ENCODE measurements at regions of chr13 and their contacts with region 1.

Region 1: DNA sequence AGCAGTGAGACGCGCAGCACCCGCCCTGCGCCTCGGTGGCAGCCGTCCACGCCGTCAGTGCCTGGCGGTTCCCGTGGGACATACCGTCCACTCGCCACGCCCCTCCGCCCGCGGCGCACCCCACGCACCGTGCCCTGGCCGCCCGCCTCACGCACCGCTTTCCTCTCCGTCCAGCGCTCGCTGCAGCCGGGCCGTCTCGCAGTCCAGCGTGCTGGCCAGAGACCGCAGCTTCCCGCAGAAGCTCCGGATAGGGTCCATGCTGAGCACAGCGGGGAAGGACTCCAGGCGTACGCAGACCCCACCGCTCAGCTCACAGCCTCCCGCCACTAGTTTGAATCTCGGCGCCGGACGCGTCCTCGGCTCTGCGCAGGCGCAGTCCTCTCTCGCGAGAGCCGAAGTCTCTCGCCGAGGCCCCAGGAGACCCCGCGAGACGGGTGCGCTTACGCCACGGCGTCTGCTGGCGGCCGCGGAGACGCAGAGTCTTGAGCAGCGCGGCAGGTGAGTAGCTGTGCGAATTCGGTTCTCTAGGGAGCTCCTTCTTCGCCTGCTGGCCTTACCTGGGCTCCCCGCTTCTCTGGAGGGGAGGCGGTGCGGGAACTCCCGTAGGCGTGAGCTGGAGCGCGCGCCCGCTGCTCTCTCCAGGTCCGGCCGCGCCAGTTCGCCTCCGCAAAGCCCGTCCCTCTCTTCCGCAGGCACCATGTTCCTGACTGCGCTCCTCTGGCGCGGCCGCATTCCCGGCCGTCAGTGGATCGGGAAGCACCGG is at the starts of genes MRPL57 and SKA3:
- DNase-seq: peak; percentile 90 to 96 (median 93)
- ATAC-seq: peak; percentile 98
- H3K4me3 ChIP-seq: peak within 1 kb of the TSS; percentile 74 to 99 (median 85)
- H3K27ac ChIP-seq: peak within 1 kb of the TSS; percentile 94 to 99 (median 96)
- H3K4me1 ChIP-seq: peaks cover 0 to 21% (median 14%) of the 10 kb centered on the region in 12 donors
- H3K27me3 ChIP-seq: no peaks in the 10 kb centered on the region
- CTCF ChIP-seq: peak in 4 of 12 donors; percentile 11 to 35 (median 16)
- POLR2A ChIP-seq: peak in 1 of 2 donors; percentile 95
- total RNA-seq, gene MRPL57: 19.0 to 51.6 (median 22.5) TPM
- total RNA-seq, gene SKA3: 0.33 to 4.5 (median 0.59) TPM in 6 of 9 donors, not detected in the others

Region 2: DNA sequence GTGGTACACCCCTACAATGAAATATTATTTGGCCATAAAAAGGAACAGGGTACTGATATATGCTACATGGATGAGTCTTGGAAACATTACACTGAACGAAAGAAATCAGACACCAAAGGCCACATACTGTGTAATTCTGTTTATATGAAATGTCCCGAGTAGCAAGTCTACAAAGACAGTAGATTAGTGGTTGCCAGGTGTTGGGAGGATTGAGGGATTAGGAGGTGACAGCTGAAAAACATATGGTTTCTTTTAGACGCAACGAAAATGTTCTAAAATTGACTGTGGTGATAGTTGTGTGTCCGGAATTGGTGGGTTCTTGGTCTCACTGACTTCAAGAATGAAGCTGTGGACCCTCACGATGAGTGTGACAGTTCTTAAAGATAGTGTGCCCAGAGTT is 437.8 kb before region 1 on chr13:
- intact Hi-C with region 1: no loop called
- DNase-seq: no peak
- ATAC-seq: no peak
- H3K4me3 ChIP-seq: no peak overlapping the region
- H3K27ac ChIP-seq: no peak overlapping the region
- H3K4me1 ChIP-seq: no peaks in the 10 kb centered on the region
- H3K27me3 ChIP-seq: no peaks in the 10 kb centered on the region
- CTCF ChIP-seq: no peak
- POLR2A ChIP-seq: no peak

Region 3: DNA sequence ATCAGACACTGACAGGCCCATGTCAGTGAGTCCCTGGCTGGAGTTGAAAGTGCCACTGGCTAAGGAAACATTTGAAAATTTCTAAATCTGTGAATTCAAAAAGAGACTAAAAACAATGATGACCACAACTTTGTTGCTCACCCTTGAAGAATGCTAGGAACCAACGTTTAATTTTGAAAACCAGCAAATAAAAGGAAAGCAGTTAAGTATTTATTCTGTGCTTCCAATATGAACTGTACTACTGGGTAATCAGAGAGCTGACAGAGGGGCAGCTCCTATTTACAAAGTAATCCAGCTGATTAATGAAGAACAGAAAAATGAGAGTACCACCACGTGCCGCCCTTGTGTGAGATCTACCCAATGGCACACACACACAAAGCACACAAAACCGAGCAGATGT is 70.3 kb before region 1 on chr13:
- intact Hi-C with region 1: loop called in 3 of 10 experiments (anchors 2 to 5 kb)
- DNase-seq: no peak
- ATAC-seq: no peak
- H3K4me3 ChIP-seq: no peak overlapping the region
- H3K27ac ChIP-seq: no peak overlapping the region
- H3K4me1 ChIP-seq: no peaks in the 10 kb centered on the region
- H3K27me3 ChIP-seq: no peaks in the 10 kb centered on the region
- CTCF ChIP-seq: no peak
- POLR2A ChIP-seq: no peak